A673 (cell line): ENCODE measurements at regions of chr3 and their contacts with region 1.

Region 1: DNA sequence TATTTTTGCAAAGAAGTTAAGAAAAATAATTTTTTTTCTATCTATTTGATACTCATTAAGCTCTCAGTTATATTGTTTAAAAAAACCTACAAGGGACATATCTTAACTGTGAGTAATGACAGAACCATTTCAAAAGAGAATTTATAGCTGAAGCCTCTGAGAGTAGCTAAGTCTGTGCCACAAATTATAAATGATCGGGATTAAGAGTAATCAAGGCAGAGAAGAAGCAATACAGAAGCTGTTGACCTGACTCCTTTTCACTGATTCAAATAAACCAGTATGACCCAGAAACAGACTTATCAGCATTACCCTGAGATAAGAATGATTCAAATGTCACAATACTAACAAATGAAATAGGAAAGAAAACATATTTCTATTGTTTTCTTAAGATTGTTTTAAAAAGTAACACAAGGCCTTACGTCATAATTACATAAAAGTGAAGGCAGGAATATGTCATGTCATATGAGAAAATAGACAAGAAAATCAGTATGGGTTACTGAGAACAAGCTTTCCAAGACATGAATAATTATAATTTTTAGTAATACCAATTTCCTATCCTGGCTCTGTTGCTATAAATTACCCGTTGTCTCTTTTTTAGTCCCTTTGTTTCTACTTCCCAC is 1534.6 kb downstream of the SI start:
- DNase-seq: peak; percentile 56
- H3K4me3 ChIP-seq: no peak overlapping the region
- H3K27ac ChIP-seq: peak overlapping the region; percentile 70
- H3K4me1 ChIP-seq: peaks cover 28% of the 10 kb centered on the region
- H3K27me3 ChIP-seq: no peaks in the 10 kb centered on the region
- CTCF ChIP-seq: no peak

Region 2: DNA sequence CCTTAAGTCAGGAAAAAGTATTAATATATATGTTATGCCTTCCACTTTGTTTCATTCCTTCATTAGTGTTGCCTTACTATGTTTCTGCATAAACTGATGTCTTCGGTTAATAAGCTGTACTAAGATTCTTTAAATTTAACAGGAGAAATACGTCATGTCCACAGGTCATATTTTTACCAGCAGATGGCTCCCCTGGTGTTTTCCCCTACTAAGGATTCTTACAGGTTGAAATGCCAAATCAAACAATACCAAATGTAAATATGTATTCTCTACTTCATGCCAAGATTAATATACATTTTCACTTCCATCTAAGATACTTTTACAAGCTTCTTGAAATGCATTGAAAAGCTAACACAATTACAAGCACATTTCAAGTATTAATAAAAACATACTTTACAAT is 67.5 kb before region 1 on chr3:
- CTCF ChIA-PET with region 1: no interaction called
- POLR2A ChIA-PET with region 1: no interaction called
- intact Hi-C with region 1: no loop called
- DNase-seq: peak; percentile 82
- H3K4me3 ChIP-seq: peak overlapping the region; percentile 21
- H3K27ac ChIP-seq: peak overlapping the region; percentile 82
- H3K4me1 ChIP-seq: peaks cover 24% of the 10 kb centered on the region
- H3K27me3 ChIP-seq: no peaks in the 10 kb centered on the region
- CTCF ChIP-seq: peak; percentile 65

Region 3: GRCh38 chr3:163523375-163523774 is 20.3 kb before region 1 on chr3:
- CTCF ChIA-PET with region 1: no interaction called
- POLR2A ChIA-PET with region 1: no interaction called
- intact Hi-C with region 1: loop called (anchors 1 kb)
- DNase-seq: no peak
- H3K4me3 ChIP-seq: no peak overlapping the region
- H3K27ac ChIP-seq: no peak overlapping the region
- H3K4me1 ChIP-seq: peaks cover 4% of the 10 kb centered on the region
- H3K27me3 ChIP-seq: no peaks in the 10 kb centered on the region
- CTCF ChIP-seq: no peak